ENCODE measurements at regions of chr5 and their contacts with region 1.

Region 1: GRCh38 chr5:147567917-147568598 is 58.2 kb upstream of the DPYSL3 start:
- DNase-seq: peak; percentile 53
- H3K4me3 ChIP-seq: no peak overlapping the region
- H3K27ac ChIP-seq: no peak overlapping the region
- H3K27me3 ChIP-seq: peaks cover 3% of the 10 kb centered on the region
- CTCF ChIP-seq: no peak

Region 2: GRCh38 chr5:147290261-147290660 is 277.8 kb before region 1 on chr5:
- CTCF ChIA-PET with region 1: no interaction called
- POLR2A ChIA-PET with region 1: interaction called, 11 read pairs
- DNase-seq: no peak
- H3K4me3 ChIP-seq: no peak overlapping the region
- H3K27ac ChIP-seq: no peak overlapping the region
- H3K27me3 ChIP-seq: peaks cover 2% of the 10 kb centered on the region
- CTCF ChIP-seq: no peak

Region 3: GRCh38 chr5:147490989-147491388 is 77.1 kb before region 1 on chr5:
- CTCF ChIA-PET with region 1: no interaction called
- POLR2A ChIA-PET with region 1: no interaction called
- DNase-seq: no peak
- H3K4me3 ChIP-seq: no peak overlapping the region
- H3K27ac ChIP-seq: no peak overlapping the region
- H3K27me3 ChIP-seq: no peaks in the 10 kb centered on the region
- CTCF ChIP-seq: no peak

Measured in AG04450 (cell line).